ENCODE measurements at regions of chr15 and their contacts with region 1.

Region 1: GRCh38 chr15:74382004-74382816 is 14.8 kb upstream of the CYP11A1 start:
- DNase-seq: peak; percentile 84
- ATAC-seq: no peak
- H3K4me3 ChIP-seq: no peak overlapping the region
- H3K4me3 Mint-ChIP-seq: no peak overlapping the region
- H3K27ac ChIP-seq: peak overlapping the region in 1 of 2 donors; percentile 97
- H3K27ac Mint-ChIP-seq: peak overlapping the region; percentile 98
- H3K4me1 ChIP-seq: peaks cover 53 to 58% of the 10 kb centered on the region in 2 donors
- H3K4me1 Mint-ChIP-seq: peaks cover 59% of the 10 kb centered on the region
- H3K27me3 ChIP-seq: no peaks in the 10 kb centered on the region
- H3K27me3 Mint-ChIP-seq: no peaks in the 10 kb centered on the region
- CTCF ChIP-seq: peak; percentile 95

Region 2: DNA sequence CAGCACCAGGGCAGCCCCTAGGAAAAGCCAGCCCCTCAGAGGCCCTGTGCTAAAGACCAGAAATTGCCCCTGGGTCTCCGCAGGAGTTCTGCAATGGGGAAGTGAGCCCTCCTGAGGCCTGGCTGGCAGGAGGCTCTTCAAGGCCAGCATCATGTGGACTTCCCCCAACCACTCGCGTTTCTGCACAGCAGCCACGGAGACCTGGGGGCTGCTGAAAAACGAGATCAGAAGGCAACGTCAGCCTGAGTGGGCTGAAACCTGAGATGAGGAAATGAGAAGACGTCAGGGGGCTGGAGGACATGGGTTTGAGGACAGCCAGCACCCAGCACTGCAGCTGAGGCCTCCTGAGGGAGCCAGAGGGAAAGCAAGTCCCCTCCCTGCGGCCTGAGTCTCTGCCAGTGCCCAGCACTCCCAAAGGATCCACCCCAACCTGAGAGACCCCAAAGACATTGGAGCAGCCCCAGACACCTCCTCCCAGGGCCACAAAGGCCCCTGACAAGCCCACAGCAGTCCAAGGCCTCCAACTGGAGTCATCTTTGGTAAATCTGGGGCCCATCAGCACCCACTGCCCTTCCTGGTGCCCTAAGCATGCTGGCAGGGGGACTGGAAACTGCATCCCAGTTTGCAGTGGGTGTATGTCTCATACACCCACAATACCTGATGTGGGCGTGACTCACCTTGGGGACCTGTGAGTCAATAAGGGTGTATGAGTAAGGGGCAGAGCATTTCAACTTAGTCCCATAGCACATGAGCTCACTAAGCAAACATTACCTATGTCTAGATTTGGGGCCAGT is 14.4 kb after region 1 on chr15:
- CTCF ChIA-PET with region 1: interaction called, 153 read pairs
- POLR2A ChIA-PET with region 1: interaction called, 64 read pairs
- intact Hi-C with region 1: loop called (anchors 1 kb)
- DNase-seq: peak; percentile 95
- ATAC-seq: peak; percentile 73
- H3K4me3 ChIP-seq: peak overlapping the region in 2 of 5 experiments; percentile 1 to 49
- H3K4me3 Mint-ChIP-seq: peak overlapping the region; percentile 78
- H3K27ac ChIP-seq: peak overlapping the region; percentile 96 to 98
- H3K27ac Mint-ChIP-seq: peak overlapping the region; percentile 97
- H3K4me1 ChIP-seq: peaks cover 95 to 100% of the 10 kb centered on the region in 2 donors
- H3K4me1 Mint-ChIP-seq: peaks cover 98% of the 10 kb centered on the region
- H3K27me3 ChIP-seq: no peaks in the 10 kb centered on the region
- H3K27me3 Mint-ChIP-seq: no peaks in the 10 kb centered on the region
- CTCF ChIP-seq: peak; percentile 10

Region 3: GRCh38 chr15:74422650-74423430 is 40.6 kb after region 1 on chr15:
- CTCF ChIA-PET with region 1: interaction called, 855 read pairs
- POLR2A ChIA-PET with region 1: interaction called, 32 read pairs
- intact Hi-C with region 1: no loop called
- DNase-seq: peak; percentile 44
- ATAC-seq: peak; percentile 44
- H3K4me3 ChIP-seq: no peak overlapping the region
- H3K4me3 Mint-ChIP-seq: peak overlapping the region; percentile 74
- H3K27ac ChIP-seq: peak overlapping the region; percentile 14 to 57
- H3K27ac Mint-ChIP-seq: peak overlapping the region; percentile 91
- H3K4me1 ChIP-seq: peaks cover 79 to 100% of the 10 kb centered on the region in 2 donors
- H3K4me1 Mint-ChIP-seq: peaks cover 91% of the 10 kb centered on the region
- H3K27me3 ChIP-seq: no peaks in the 10 kb centered on the region
- H3K27me3 Mint-ChIP-seq: no peaks in the 10 kb centered on the region
- CTCF ChIP-seq: no peak

Region 4: DNA sequence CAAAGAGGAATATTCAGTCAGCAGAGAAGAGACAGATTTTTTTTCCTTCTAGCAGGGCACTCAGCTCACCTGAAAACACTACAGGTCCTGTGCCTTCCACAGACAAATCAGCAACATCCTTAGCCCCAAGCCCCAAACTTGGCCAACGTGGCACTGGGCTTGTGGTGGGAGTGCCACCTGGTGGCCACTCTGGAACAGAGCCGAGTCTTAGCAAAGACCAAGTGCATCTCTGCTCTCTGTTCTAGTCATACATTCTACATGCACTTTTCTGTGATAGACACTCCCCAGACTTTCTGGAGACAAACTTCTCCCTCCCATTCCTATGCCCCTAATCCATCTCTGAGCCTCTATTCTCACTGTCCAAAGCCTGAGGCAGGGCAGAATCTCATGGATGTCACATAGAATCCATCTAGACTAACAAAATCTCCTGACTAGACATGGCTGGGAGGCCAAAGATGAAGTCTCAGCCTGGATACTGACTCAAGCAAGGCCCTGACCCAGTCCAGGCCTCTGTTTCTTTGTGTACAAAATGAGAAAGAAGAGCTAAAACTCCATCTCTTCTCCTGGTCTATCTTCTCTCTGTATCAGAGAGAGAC is 56.6 kb after region 1 on chr15:
- CTCF ChIA-PET with region 1: interaction called, 855 read pairs
- POLR2A ChIA-PET with region 1: interaction called, 35 read pairs
- intact Hi-C with region 1: loop called (anchors 1 kb)
- DNase-seq: peak; percentile 88
- ATAC-seq: peak; percentile 44
- H3K4me3 ChIP-seq: no peak overlapping the region
- H3K4me3 Mint-ChIP-seq: no peak overlapping the region
- H3K27ac ChIP-seq: no peak overlapping the region
- H3K27ac Mint-ChIP-seq: peak overlapping the region; percentile 0
- H3K4me1 ChIP-seq: peaks cover 17 to 27% of the 10 kb centered on the region in 2 donors
- H3K4me1 Mint-ChIP-seq: peaks cover 36% of the 10 kb centered on the region
- H3K27me3 ChIP-seq: no peaks in the 10 kb centered on the region
- H3K27me3 Mint-ChIP-seq: no peaks in the 10 kb centered on the region
- CTCF ChIP-seq: peak; percentile 90

Region 5: GRCh38 chr15:74460871-74461846 is 78.9 kb after region 1 on chr15 and contains the start of gene UBL7:
- CTCF ChIA-PET with region 1: interaction called, 54 read pairs
- POLR2A ChIA-PET with region 1: interaction called, 8 read pairs
- intact Hi-C with region 1: loop called (anchors 1 kb)
- DNase-seq: peak; percentile 96
- ATAC-seq: peak; percentile 95
- H3K4me3 ChIP-seq: peak within 1 kb of the TSS; percentile 78 to 99 (median 90)
- H3K4me3 Mint-ChIP-seq: peak within 1 kb of the TSS; percentile 92
- H3K27ac ChIP-seq: peak within 1 kb of the TSS; percentile 77 to 80
- H3K27ac Mint-ChIP-seq: peak within 1 kb of the TSS; percentile 76
- H3K4me1 ChIP-seq: peaks cover 30 to 40% of the 10 kb centered on the region in 2 donors
- H3K4me1 Mint-ChIP-seq: peaks cover 39% of the 10 kb centered on the region
- H3K27me3 ChIP-seq: no peaks in the 10 kb centered on the region
- H3K27me3 Mint-ChIP-seq: no peaks in the 10 kb centered on the region
- CTCF ChIP-seq: no peak
- total RNA-seq, gene UBL7: 44.4 and 50.1 TPM in 2 replicates